CD8-positive, alpha-beta T cell (primary cell): ENCODE measurements at regions of chr17 and their contacts with region 1.

Region 1: DNA sequence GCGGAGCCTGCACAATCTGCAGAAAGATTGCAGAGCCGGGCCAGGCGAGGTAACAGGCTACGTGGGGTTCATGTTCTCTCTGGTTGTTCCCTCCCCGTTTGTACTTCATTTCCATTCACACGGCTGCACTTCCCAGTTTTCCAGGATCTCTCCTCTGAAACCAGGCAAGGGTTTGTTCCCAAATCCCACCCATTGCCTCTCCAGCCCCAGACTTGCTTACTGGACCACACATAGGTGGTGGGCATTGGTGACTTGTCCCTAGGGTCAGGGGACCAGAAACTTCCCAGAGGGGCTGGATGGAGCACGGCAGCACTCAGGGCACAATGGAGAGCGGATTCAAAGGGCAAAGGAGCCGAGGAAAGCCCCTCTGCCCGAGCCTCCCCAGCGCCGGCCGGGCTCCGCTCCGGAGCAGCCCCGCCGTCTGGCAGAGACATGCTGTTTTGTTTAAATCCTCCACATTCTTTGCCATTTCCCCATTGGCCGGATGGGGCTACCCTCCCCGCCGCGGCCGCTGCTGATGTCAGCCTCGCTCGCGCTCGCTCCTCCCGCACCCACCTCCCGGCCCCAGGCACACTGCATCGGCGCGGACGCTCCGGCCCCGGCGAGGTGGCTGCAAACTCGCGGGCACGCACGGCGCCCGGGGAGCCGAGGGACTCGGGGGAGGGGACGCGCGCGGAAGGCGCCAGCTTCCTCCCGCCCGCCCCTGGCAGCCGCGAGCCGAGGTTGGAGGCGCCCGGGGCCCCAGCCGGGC is at the start of gene PITPNC1:
- DNase-seq: peak; percentile 72 to 95 (median 88)
- ATAC-seq: peak; percentile 70
- H3K4me3 ChIP-seq: peak within 1 kb of the TSS; percentile 94 to 97
- H3K4me3 Mint-ChIP-seq: peak within 1 kb of the TSS; percentile 95
- H3K27ac ChIP-seq: peak within 1 kb of the TSS; percentile 81 to 87
- H3K27ac Mint-ChIP-seq: peak within 1 kb of the TSS; percentile 94
- H3K4me1 ChIP-seq: peaks cover 41% of the 10 kb centered on the region
- H3K4me1 Mint-ChIP-seq: peaks cover 46% of the 10 kb centered on the region
- H3K27me3 ChIP-seq: no peaks in the 10 kb centered on the region
- H3K27me3 Mint-ChIP-seq: no peaks in the 10 kb centered on the region
- CTCF ChIP-seq: no peak
- total RNA-seq, gene PITPNC1: 110 to 111 TPM

Region 2: GRCh38 chr17:66957951-66958579 is 418.8 kb before region 1 on chr17:
- CTCF ChIA-PET with region 1: no interaction called
- POLR2A ChIA-PET with region 1: no interaction called
- intact Hi-C with region 1: no loop called
- DNase-seq: no peak
- ATAC-seq: no peak
- H3K4me3 ChIP-seq: no peak overlapping the region
- H3K4me3 Mint-ChIP-seq: no peak overlapping the region
- H3K27ac ChIP-seq: no peak overlapping the region
- H3K27ac Mint-ChIP-seq: no peak overlapping the region
- H3K4me1 ChIP-seq: no peaks in the 10 kb centered on the region
- H3K4me1 Mint-ChIP-seq: peaks cover under 1% of the 10 kb centered on the region
- H3K27me3 ChIP-seq: peaks cover 0 to 3% of the 10 kb centered on the region in 2 experiments
- H3K27me3 Mint-ChIP-seq: peaks cover 31% of the 10 kb centered on the region
- CTCF ChIP-seq: no peak

Region 3: DNA sequence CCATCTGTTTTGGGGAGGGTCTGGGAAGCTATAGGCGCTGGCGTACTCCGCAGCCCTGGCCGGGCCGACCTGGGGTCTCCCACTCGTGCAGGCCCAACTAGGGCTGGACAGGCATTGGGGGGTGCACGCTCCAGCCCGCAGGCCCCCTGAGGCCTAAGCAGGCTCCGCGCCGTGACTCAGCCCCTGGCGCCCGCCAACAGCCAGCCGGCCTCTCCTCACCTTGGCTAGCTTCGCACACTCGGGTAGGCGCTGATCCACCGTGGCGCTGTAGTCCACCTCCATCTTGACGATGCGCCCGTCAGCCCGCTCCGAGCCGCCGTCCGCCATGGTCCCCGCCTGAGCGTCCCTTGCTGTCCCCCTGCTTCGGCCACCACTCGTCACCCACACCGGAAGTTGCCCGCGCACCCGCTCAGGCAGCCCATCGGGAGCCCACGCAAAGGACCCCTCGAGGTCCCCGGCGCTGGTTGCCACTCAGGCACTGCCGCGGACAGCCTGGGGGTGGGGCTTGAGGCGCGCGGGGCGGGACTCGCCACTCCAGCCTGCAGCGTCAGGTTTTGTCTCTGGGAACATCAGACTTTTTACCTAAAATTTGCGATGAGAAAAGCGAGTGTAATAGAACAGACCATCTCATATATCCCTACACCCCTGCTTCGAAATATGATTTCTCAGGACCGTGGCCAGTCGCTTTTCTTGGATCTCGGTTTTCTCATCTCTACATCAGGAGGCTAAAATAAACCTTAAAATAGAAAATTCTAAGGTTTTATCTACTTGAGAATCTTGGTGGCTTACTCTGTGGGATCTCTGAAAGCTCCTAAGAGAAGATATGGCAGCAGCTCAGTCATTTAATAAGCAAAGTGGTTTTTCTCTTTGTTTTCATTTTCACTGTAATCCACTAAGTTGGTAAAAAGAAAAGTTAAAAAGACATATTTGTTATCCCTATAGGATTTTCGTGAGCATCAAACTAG is 10.4 kb before region 1 on chr17 and contains the start of gene PSMD12:
- CTCF ChIA-PET with region 1: interaction called, 69 read pairs
- POLR2A ChIA-PET with region 1: interaction called, 6 read pairs
- intact Hi-C with region 1: loop called (anchors 1 kb)
- DNase-seq: peak; percentile 88 to 97 (median 93)
- ATAC-seq: peak; percentile 97
- H3K4me3 ChIP-seq: peak within 1 kb of the TSS; percentile 87 to 94
- H3K4me3 Mint-ChIP-seq: peak within 1 kb of the TSS; percentile 92
- H3K27ac ChIP-seq: peak within 1 kb of the TSS; percentile 86 to 95
- H3K27ac Mint-ChIP-seq: peak within 1 kb of the TSS; percentile 95
- H3K4me1 ChIP-seq: peaks cover 40% of the 10 kb centered on the region
- H3K4me1 Mint-ChIP-seq: peaks cover 43% of the 10 kb centered on the region
- H3K27me3 ChIP-seq: no peaks in the 10 kb centered on the region
- H3K27me3 Mint-ChIP-seq: no peaks in the 10 kb centered on the region
- CTCF ChIP-seq: no peak
- total RNA-seq, gene PSMD12: 52.1 to 54.9 TPM

Region 4: DNA sequence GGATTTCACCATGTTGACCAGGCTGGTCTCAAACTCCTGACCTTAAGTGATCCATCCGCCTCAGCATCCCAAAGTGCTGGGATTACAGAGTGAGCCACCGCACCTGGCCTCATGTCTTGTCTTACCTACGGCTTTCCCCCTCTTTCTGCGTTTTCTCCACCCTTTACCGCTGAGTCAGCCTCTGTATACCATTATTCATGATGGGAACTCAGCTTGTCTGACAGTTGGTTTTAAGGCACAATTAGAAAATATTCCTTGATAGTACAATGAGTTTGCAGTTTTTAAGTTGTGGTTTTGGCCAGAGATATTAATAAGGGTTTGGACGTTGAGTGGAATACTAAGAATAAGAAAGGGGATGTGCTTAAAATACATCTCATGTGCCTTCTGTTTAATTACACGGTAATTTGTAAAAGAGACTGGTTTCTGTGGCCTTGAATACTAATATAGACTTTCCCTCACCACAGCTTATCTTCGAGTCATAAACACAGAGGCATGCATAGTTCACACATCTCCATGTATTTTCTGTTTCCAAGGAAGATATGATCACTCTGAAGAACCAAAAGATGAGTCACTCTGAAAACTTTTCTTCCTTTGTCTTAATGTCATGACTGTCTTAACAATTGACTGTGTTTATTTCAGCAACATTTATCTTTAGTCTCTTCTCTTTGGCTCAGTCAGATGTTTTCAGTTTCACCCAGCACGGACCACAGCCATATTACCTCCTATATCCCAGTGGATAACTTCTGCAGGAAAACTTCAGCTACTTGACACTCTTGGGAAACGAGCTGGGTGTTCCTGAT is 54.5 kb after region 1 on chr17:
- CTCF ChIA-PET with region 1: interaction called, 30 read pairs
- POLR2A ChIA-PET with region 1: interaction called, 34 read pairs
- intact Hi-C with region 1: no loop called
- DNase-seq: peak in 3 of 9 experiments; percentile 26 to 55 (median 27)
- ATAC-seq: no peak
- H3K4me3 ChIP-seq: no peak overlapping the region
- H3K4me3 Mint-ChIP-seq: no peak overlapping the region
- H3K27ac ChIP-seq: peak overlapping the region in 1 of 2 experiments; percentile 40
- H3K27ac Mint-ChIP-seq: peak overlapping the region; percentile 67
- H3K4me1 ChIP-seq: peaks cover 54% of the 10 kb centered on the region
- H3K4me1 Mint-ChIP-seq: peaks cover 72% of the 10 kb centered on the region
- H3K27me3 ChIP-seq: no peaks in the 10 kb centered on the region
- H3K27me3 Mint-ChIP-seq: no peaks in the 10 kb centered on the region
- CTCF ChIP-seq: no peak

Region 5: DNA sequence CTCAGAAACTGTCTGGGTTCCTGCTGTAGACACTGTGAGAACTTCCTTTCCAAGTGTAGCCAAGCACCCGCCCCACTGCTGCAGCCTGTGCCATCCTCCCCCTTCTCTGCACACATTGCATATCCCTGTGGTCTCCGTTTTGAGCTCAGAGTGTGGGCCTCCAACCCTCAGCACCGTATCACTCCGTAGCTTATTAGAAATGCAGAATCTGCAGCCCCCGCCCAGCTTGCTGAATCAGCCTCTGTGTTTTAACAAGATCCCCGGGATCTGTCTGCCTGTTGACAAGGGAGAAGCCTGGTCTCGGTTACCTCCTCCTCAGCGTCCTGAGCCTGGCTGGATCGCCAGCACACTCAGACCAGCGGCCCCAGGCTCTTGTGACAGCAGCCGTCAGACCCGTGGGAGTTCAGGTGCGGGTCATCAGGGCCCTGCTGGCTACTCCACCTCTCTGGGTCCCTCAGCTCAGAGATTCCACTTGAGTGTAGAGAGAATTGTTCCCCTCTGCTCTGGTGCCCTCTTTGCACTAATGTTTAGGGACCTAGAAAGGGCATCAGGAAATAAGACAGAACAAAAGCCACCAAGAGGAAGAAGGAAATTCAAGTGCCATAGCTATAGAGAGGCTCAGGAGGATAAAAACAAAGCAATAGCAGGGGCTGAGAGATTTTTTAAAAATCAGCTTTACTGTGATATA is 92.4 kb after region 1 on chr17:
- CTCF ChIA-PET with region 1: interaction called, 502 read pairs
- POLR2A ChIA-PET with region 1: interaction called, 159 read pairs
- intact Hi-C with region 1: no loop called
- DNase-seq: peak in 6 of 9 experiments; percentile 20 to 64 (median 40)
- ATAC-seq: peak; percentile 85
- H3K4me3 ChIP-seq: peak overlapping the region; percentile 28 to 33
- H3K4me3 Mint-ChIP-seq: peak overlapping the region; percentile 80
- H3K27ac ChIP-seq: peak overlapping the region; percentile 53 to 61
- H3K27ac Mint-ChIP-seq: peak overlapping the region; percentile 93
- H3K4me1 ChIP-seq: peaks cover 71% of the 10 kb centered on the region
- H3K4me1 Mint-ChIP-seq: peaks cover 72% of the 10 kb centered on the region
- H3K27me3 ChIP-seq: no peaks in the 10 kb centered on the region
- H3K27me3 Mint-ChIP-seq: no peaks in the 10 kb centered on the region
- CTCF ChIP-seq: no peak

Region 6: DNA sequence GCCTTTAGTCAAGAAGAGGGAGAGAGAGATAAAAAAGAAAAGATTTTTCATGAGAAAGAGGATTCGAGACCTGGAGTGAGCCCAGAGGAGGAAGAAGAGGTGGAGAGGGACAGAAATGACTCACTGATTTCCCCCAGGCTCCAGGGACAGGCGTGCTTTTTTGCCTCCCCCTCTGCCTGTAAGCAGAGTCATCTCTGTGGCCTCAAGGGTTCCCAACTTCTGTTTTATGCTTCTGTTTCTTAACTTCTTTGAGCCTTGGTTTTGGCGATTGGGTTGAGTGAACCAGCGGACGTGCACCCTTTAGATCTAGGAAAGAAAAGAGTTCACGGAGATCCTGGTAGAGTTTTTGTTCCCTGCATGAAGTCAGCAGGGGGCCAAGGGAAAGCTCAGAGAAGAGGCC is 193.0 kb after region 1 on chr17:
- CTCF ChIA-PET with region 1: interaction called, 12 read pairs
- POLR2A ChIA-PET with region 1: interaction called, 3 read pairs
- intact Hi-C with region 1: no loop called
- DNase-seq: peak in 1 of 9 experiments; percentile 7
- ATAC-seq: no peak
- H3K4me3 ChIP-seq: no peak overlapping the region
- H3K4me3 Mint-ChIP-seq: no peak overlapping the region
- H3K27ac ChIP-seq: no peak overlapping the region
- H3K27ac Mint-ChIP-seq: peak overlapping the region; percentile 45
- H3K4me1 ChIP-seq: no peaks in the 10 kb centered on the region
- H3K4me1 Mint-ChIP-seq: peaks cover 36% of the 10 kb centered on the region
- H3K27me3 ChIP-seq: no peaks in the 10 kb centered on the region
- H3K27me3 Mint-ChIP-seq: no peaks in the 10 kb centered on the region
- CTCF ChIP-seq: no peak

Region 7: DNA sequence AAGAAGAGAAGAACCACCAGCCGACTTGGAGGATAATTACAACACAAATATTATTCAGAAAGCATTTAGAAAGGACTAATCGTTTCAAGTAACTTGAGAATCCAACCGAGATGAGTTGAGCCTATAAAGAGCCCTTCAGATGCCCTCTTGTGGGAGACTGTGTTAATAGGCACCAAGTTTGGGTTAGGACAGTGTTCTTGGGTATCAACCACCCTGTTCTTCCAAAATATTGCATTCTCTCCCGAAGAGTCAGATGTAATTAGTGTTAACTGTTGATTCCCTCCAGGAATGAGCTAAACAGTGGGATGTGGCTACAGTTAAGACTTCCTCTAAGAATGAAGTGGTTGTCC is 253.0 kb after region 1 on chr17:
- CTCF ChIA-PET with region 1: interaction called, 46 read pairs
- POLR2A ChIA-PET with region 1: no interaction called
- intact Hi-C with region 1: loop called (anchors 1 kb)
- DNase-seq: peak in 2 of 9 experiments; percentile 35 to 49
- ATAC-seq: peak; percentile 34
- H3K4me3 ChIP-seq: no peak overlapping the region
- H3K4me3 Mint-ChIP-seq: no peak overlapping the region
- H3K27ac ChIP-seq: no peak overlapping the region
- H3K27ac Mint-ChIP-seq: peak overlapping the region; percentile 46
- H3K4me1 ChIP-seq: no peaks in the 10 kb centered on the region
- H3K4me1 Mint-ChIP-seq: peaks cover 16% of the 10 kb centered on the region
- H3K27me3 ChIP-seq: no peaks in the 10 kb centered on the region
- H3K27me3 Mint-ChIP-seq: no peaks in the 10 kb centered on the region
- CTCF ChIP-seq: no peak